H1 (cell line): ENCODE measurements at regions of chr10 and their contacts with region 1.

Region 1: DNA sequence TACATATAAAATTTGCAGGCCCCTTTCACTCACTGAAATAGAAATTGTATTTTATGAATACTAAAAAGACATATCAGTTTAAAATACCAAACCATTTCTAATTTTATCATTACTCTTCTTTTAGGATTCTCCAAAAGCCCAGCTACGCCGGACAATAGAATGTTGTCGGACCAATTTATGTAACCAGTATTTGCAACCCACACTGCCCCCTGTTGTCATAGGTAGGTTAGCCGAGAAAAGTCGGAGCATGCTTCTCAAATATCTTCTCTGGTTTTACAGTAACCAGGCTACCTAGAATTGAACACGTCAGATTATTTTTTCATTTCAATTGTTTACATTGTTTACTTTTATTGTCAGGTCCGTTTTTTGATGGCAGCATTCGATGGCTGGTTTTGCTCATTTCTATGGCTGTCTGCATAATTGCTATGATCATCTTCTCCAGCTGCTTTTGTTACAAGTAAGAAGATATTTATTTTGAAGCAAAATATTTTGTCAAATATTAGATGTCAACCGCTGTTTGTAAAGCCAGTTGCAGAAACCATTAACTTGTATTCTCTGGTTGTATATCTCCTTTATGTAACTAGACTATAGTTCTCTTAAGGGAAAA is 57.6 kb downstream of the MMRN2 start:
- DNase-seq: no peak
- H3K4me3 ChIP-seq: no peak overlapping the region
- H3K27ac ChIP-seq: no peak overlapping the region
- H3K4me1 ChIP-seq: peaks cover 0 to 6% (median 2%) of the 10 kb centered on the region in 4 experiments; a peak in 3 of 7 replicates
- H3K27me3 ChIP-seq: no peaks in the 10 kb centered on the region
- CTCF ChIP-seq: peak in 2 of 3 experiments; percentile 53 to 64; a peak in 3 of 4 replicates
- EP300 ChIP-seq: no peak
- POLR2A ChIP-seq: no peak
- RAD21 ChIP-seq: peak; percentile 76 to 77

Region 2: GRCh38 chr10:86693721-86694369 is 205.9 kb before region 1 on chr10:
- CTCF ChIA-PET with region 1: interaction called, 40 read pairs
- POLR2A ChIA-PET with region 1: interaction called, 3 read pairs
- DNase-seq: peak in 1 of 2 experiments; percentile 74
- H3K4me3 ChIP-seq: no peak overlapping the region
- H3K27ac ChIP-seq: no peak overlapping the region
- H3K4me1 ChIP-seq: peaks cover 3 to 15% (median 4%) of the 10 kb centered on the region in 4 experiments
- H3K27me3 ChIP-seq: 0 out of 7 replicates have a peak, but pooled peaks cover 0 to 3% (median 0%) of the 10 kb centered on the region in 4 experiments
- CTCF ChIP-seq: peak; percentile 40 to 55 (median 50)
- EP300 ChIP-seq: no peak
- POLR2A ChIP-seq: no peak
- RAD21 ChIP-seq: peak; percentile 54 to 57

Region 3: DNA sequence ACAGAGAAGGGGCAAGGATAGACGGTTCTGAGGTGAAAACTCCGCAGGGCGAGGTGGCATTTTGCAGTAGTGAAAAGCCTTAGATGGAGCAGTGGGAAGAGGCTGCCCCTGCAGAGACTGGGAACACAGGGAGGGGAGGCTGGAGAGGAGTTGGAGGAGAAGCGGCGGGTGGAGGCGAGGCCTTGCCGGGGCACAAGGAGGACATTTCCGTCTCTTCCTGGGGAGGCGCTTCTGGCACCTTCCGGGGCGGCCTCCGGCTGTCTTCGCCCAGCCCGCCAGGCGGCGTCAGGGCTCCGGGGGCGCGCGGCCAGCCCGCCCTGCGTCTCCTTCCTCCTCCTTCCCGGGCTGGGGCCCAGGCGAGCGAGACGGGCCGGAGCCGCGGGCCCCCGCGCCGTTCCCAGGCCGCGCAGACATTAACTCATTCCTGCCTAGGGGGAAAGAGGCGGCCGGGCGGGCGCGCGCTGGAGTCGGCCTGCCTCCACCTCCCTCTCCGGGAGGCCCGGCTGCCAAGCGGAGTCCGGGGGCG is 188.7 kb before region 1 on chr10:
- CTCF ChIA-PET with region 1: interaction called, 23 read pairs
- POLR2A ChIA-PET with region 1: interaction called, 3 read pairs
- DNase-seq: peak; percentile 68 to 92
- H3K4me3 ChIP-seq: peak overlapping the region; percentile 46 to 67 (median 54)
- H3K27ac ChIP-seq: no peak overlapping the region; the same call in 1 of the 2 replicates
- H3K4me1 ChIP-seq: peaks cover 3 to 28% (median 12%) of the 10 kb centered on the region in 4 experiments
- H3K27me3 ChIP-seq: no peaks in the 10 kb centered on the region
- CTCF ChIP-seq: peak; percentile 68 to 97 (median 80)
- EP300 ChIP-seq: no peak
- POLR2A ChIP-seq: peak in 1 of 2 experiments; percentile 64; a peak in 2 of 3 replicates
- RAD21 ChIP-seq: peak; percentile 72 to 80

Region 4: DNA sequence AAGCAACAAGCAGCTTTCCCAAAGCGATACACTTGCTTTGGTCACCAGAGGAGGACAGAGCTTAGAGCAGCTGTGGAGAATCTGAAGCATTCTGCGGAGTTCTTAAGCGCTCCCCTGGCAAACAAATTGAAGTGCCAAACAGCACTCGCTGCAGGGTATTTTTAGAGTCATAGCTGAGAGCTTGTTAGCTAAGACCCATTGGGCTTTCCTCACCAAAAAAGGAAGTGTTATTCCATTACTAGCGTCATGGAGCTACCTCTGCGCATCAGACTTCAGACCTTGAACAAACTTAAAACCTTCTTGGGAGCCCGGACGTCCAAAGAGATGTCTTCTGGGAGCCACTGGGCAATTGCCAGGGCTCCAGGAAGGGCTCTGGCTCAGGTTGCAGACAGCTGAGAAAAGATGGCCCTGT is 166.5 kb before region 1 on chr10:
- CTCF ChIA-PET with region 1: interaction called, 16 read pairs
- POLR2A ChIA-PET with region 1: no interaction called
- DNase-seq: no peak
- H3K4me3 ChIP-seq: no peak overlapping the region
- H3K27ac ChIP-seq: no peak overlapping the region
- H3K4me1 ChIP-seq: peaks cover 0 to 4% (median 0%) of the 10 kb centered on the region in 4 experiments; a peak in 2 of 7 replicates
- H3K27me3 ChIP-seq: no peaks in the 10 kb centered on the region
- CTCF ChIP-seq: no peak
- EP300 ChIP-seq: no peak
- POLR2A ChIP-seq: no peak
- RAD21 ChIP-seq: no peak

Region 5: GRCh38 chr10:86770417-86770960 is 129.3 kb before region 1 on chr10:
- CTCF ChIA-PET with region 1: interaction called, 11 read pairs
- POLR2A ChIA-PET with region 1: no interaction called
- DNase-seq: no peak
- H3K4me3 ChIP-seq: no peak overlapping the region
- H3K27ac ChIP-seq: no peak overlapping the region; the same call in 1 of the 2 replicates
- H3K4me1 ChIP-seq: peaks cover 9 to 32% (median 21%) of the 10 kb centered on the region in 4 experiments
- H3K27me3 ChIP-seq: no peaks in the 10 kb centered on the region
- CTCF ChIP-seq: no peak
- EP300 ChIP-seq: no peak
- POLR2A ChIP-seq: no peak
- RAD21 ChIP-seq: no peak

Region 6: DNA sequence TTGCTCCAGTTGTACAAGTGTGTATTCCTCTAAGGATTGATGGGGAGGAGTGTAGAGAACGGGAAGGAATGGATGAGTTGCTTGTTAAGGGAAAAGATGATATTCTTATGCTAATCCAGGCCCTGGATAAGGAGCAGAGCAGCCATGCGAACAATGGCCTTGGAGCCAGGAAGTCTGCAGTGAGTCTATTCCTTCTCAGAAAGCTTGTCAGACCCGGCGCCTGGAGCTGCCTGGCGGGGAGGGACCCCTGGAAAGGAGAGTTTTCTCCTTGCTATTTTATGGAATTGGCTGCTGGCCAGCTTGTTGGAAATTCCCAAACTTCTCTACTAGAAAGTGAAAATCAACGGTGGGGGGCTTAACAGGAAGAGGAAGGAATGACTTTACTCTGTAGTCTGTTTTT is 31.4 kb before region 1 on chr10:
- CTCF ChIA-PET with region 1: interaction called, 10 read pairs
- POLR2A ChIA-PET with region 1: interaction called, 3 read pairs
- DNase-seq: peak in 1 of 2 experiments; percentile 79
- H3K4me3 ChIP-seq: peak overlapping the region in 1 of 4 experiments; percentile 28; a peak in 1 of 8 replicates
- H3K27ac ChIP-seq: peak overlapping the region; percentile 40
- H3K4me1 ChIP-seq: peaks cover 8 to 37% (median 34%) of the 10 kb centered on the region in 4 experiments
- H3K27me3 ChIP-seq: no peaks in the 10 kb centered on the region
- CTCF ChIP-seq: no peak
- EP300 ChIP-seq: peak in 1 of 2 experiments; percentile 75; a peak in 1 of 3 replicates
- POLR2A ChIP-seq: no peak
- RAD21 ChIP-seq: peak; percentile 14 to 18; a peak in 1 of 4 replicates

Region 7: GRCh38 chr10:86979977-86980795 is 80.4 kb after region 1 on chr10:
- CTCF ChIA-PET with region 1: no interaction called
- POLR2A ChIA-PET with region 1: no interaction called
- DNase-seq: no peak
- H3K4me3 ChIP-seq: no peak overlapping the region
- H3K27ac ChIP-seq: no peak overlapping the region
- H3K4me1 ChIP-seq: peaks cover 0 to 2% (median 0%) of the 10 kb centered on the region in 4 experiments; a peak in 1 of 7 replicates
- H3K27me3 ChIP-seq: no peaks in the 10 kb centered on the region
- CTCF ChIP-seq: no peak
- EP300 ChIP-seq: no peak
- POLR2A ChIP-seq: no peak
- RAD21 ChIP-seq: no peak